Caco-2 (cell line): ENCODE measurements at regions of chr6 and their contacts with region 1.

Region 1: DNA sequence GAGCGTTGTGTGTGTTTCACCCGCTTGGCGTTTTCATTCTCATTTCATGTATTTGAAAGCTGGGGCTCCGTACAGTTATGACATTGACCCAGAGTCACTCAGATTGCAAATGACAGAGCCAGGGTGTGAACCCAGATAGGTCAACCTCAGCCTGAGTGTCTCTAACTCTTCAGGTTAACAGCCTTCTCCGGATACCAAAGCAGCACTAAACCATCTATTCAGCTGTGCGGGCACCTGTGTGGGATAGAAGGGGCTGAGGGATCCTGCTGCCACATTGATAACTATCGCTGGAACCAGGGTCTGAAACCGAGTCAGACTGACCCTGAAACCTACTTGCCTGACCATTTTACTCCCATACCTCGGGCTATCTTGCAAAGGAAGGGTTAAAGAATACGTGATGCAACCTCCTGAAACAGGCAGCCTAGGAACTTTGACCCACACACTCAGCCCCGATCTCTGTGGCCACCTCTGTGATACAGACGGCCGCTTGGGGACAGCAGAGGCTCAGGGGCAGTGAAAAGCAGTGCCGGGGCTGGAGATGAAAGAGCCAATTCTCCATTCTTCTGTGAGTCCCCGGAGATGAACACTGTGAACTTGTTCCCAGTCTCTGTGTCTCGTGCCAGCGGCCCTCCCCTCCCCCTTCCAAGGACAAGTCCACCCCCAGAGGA is 233.5 kb upstream of the QKI start:
- DNase-seq: peak; percentile 86 to 88
- H3K4me3 ChIP-seq: no peak overlapping the region
- H3K4me3 Mint-ChIP-seq: peak overlapping the region; percentile 33
- H3K27ac Mint-ChIP-seq: peak overlapping the region; percentile 89
- H3K4me1 ChIP-seq: peaks cover 6% of the 10 kb centered on the region
- H3K4me1 Mint-ChIP-seq: no peaks in the 10 kb centered on the region
- H3K27me3 ChIP-seq: no peaks in the 10 kb centered on the region
- H3K27me3 Mint-ChIP-seq: no peaks in the 10 kb centered on the region
- CTCF ChIP-seq: peak; percentile 62 to 96

Region 2: GRCh38 chr6:162856885-162857284 is 324.1 kb before region 1 on chr6:
- CTCF ChIA-PET with region 1: no interaction called
- POLR2A ChIA-PET with region 1: no interaction called
- intact Hi-C with region 1: loop called (anchors 10 kb)
- DNase-seq: peak in 1 of 2 experiments; percentile 36
- H3K4me3 ChIP-seq: no peak overlapping the region
- H3K4me3 Mint-ChIP-seq: no peak overlapping the region
- H3K27ac Mint-ChIP-seq: no peak overlapping the region
- H3K4me1 ChIP-seq: no peaks in the 10 kb centered on the region
- H3K4me1 Mint-ChIP-seq: no peaks in the 10 kb centered on the region
- H3K27me3 ChIP-seq: no peaks in the 10 kb centered on the region
- H3K27me3 Mint-ChIP-seq: peaks cover 6% of the 10 kb centered on the region
- CTCF ChIP-seq: peak; percentile 31 to 61

Region 3: GRCh38 chr6:163147994-163148393 is 33.0 kb before region 1 on chr6:
- CTCF ChIA-PET with region 1: no interaction called
- POLR2A ChIA-PET with region 1: no interaction called
- intact Hi-C with region 1: no loop called
- DNase-seq: no peak
- H3K4me3 ChIP-seq: no peak overlapping the region
- H3K4me3 Mint-ChIP-seq: no peak overlapping the region
- H3K27ac Mint-ChIP-seq: no peak overlapping the region
- H3K4me1 ChIP-seq: no peaks in the 10 kb centered on the region
- H3K4me1 Mint-ChIP-seq: no peaks in the 10 kb centered on the region
- H3K27me3 ChIP-seq: no peaks in the 10 kb centered on the region
- H3K27me3 Mint-ChIP-seq: peaks cover 14% of the 10 kb centered on the region
- CTCF ChIP-seq: peak in 1 of 2 experiments; percentile 35

Region 4: DNA sequence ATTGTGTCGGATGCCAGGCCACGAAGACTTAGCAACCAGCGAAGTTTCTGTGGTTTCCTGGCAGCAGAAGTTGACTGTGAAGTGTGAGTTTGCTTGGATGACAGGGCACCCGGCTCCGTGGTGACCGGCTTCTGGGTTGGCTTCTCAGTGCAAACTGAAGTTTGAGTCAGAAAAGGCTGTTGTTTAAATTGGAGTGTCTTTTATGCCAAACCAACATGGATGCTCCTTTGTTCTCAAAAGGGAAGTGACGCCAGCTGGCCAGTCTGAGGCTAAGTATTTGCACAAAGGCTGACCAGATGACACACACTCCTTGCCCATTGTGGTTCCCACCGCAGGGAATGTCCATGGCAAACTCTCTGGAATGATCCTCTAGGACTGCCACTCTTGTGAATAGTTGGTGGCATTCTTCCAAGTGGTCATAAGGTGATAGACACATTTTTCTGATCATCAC is 68.7 kb after region 1 on chr6:
- CTCF ChIA-PET with region 1: no interaction called
- POLR2A ChIA-PET with region 1: no interaction called
- intact Hi-C with region 1: loop called (anchors 1 kb)
- DNase-seq: no peak
- H3K4me3 ChIP-seq: no peak overlapping the region
- H3K4me3 Mint-ChIP-seq: no peak overlapping the region
- H3K27ac Mint-ChIP-seq: no peak overlapping the region
- H3K4me1 ChIP-seq: no peaks in the 10 kb centered on the region
- H3K4me1 Mint-ChIP-seq: no peaks in the 10 kb centered on the region
- H3K27me3 ChIP-seq: no peaks in the 10 kb centered on the region
- H3K27me3 Mint-ChIP-seq: no peaks in the 10 kb centered on the region
- CTCF ChIP-seq: no peak

Region 5: GRCh38 chr6:163554663-163555062 is 373.7 kb after region 1 on chr6:
- CTCF ChIA-PET with region 1: no interaction called
- POLR2A ChIA-PET with region 1: no interaction called
- intact Hi-C with region 1: loop called (anchors 1 kb)
- DNase-seq: peak; percentile 46 to 55
- H3K4me3 ChIP-seq: no peak overlapping the region
- H3K4me3 Mint-ChIP-seq: no peak overlapping the region
- H3K27ac Mint-ChIP-seq: no peak overlapping the region
- H3K4me1 ChIP-seq: no peaks in the 10 kb centered on the region
- H3K4me1 Mint-ChIP-seq: no peaks in the 10 kb centered on the region
- H3K27me3 ChIP-seq: no peaks in the 10 kb centered on the region
- H3K27me3 Mint-ChIP-seq: no peaks in the 10 kb centered on the region
- CTCF ChIP-seq: peak; percentile 38 to 49

Region 6: DNA sequence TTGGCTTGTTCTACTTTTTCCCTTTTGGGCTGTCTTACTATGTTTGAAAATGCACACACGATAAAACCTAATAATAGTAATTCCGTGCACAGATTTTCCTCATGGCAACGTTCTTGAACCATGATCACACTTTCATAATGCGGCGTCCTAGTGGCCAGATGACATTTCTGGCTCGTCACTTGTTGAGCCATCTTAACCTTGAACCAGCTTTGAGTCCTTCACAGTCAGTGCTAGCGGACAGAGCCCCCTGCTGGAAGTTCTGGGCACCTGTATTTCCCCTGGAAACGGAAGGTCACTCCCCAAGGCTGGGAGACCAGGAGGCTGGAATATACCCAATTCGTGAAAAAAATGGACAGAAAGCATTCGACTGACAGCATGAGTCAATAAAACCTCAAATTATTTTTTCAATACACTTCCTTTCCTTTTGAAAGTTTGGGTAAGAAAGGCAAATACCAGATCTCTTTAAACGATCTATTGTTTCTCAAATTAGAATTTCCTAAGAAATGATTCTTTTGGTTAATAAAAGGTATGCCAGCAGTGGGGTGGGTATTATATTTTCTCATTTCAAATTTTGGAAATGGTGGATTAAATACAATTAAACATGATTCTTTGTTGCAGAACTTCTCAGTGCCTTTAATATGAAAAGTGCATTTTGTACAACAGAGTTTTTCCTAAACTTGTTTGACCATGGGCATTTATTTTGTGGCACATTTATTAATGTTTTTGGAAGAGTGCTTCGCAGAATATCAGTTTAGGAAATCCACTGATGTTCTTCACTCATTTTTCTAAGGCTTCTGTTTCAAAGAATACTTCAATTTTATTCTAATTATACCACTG is 775.8 kb after region 1 on chr6:
- CTCF ChIA-PET with region 1: no interaction called
- POLR2A ChIA-PET with region 1: no interaction called
- intact Hi-C with region 1: loop called (anchors 1 kb)
- DNase-seq: peak; percentile 76 to 78
- H3K4me3 ChIP-seq: no peak overlapping the region
- H3K4me3 Mint-ChIP-seq: no peak overlapping the region
- H3K27ac Mint-ChIP-seq: no peak overlapping the region
- H3K4me1 ChIP-seq: no peaks in the 10 kb centered on the region
- H3K4me1 Mint-ChIP-seq: no peaks in the 10 kb centered on the region
- H3K27me3 ChIP-seq: no peaks in the 10 kb centered on the region
- H3K27me3 Mint-ChIP-seq: peaks cover 4% of the 10 kb centered on the region
- CTCF ChIP-seq: peak; percentile 64 to 80